GM12878 (cell line): ENCODE measurements at regions of chr5 and their contacts with region 1.

Region 1: GRCh38 chr5:137888857-137889759 is at the start of gene PKD2L2:
- DNase-seq: peak; percentile 75
- ATAC-seq: peak; percentile 99
- H3K4me3 ChIP-seq: peak within 1 kb of the TSS; percentile 79
- H3K27ac ChIP-seq: peak within 1 kb of the TSS; percentile 84
- H3K4me1 ChIP-seq: no peaks in the 10 kb centered on the region
- H3K27me3 ChIP-seq: no peaks in the 10 kb centered on the region
- CTCF ChIP-seq: peak in 2 of 3 experiments; percentile 7 to 12; a peak in 1 of 6 replicates
- EP300 ChIP-seq: 0 out of 4 replicates have a peak, but pooled peaks of 1 of the 2 experiments have one; percentile 26
- POLR2A ChIP-seq: peak; percentile 99
- RAD21 ChIP-seq: no peak
- polyA plus RNA-seq, gene PKD2L2: 0.11 to 0.16 TPM

Region 2: GRCh38 chr5:137858223-137858916 is 30.7 kb before region 1 on chr5:
- CTCF ChIA-PET with region 1: interaction called, 12 read pairs
- POLR2A ChIA-PET with region 1: interaction called, 26 read pairs
- RAD21 ChIA-PET with region 1: interaction called, 11 read pairs
- SMC1A ChIA-PET with region 1: interaction called, 25 read pairs
- in situ Hi-C with region 1: no loop called
- intact Hi-C with region 1: loop called (anchors 2 kb)
- DNase-seq: peak; percentile 58
- ATAC-seq: peak; percentile 91
- H3K4me3 ChIP-seq: no peak overlapping the region
- H3K27ac ChIP-seq: peak overlapping the region; percentile 11
- H3K4me1 ChIP-seq: peaks cover 29% of the 10 kb centered on the region
- H3K27me3 ChIP-seq: no peaks in the 10 kb centered on the region
- CTCF ChIP-seq: no peak
- EP300 ChIP-seq: no peak
- POLR2A ChIP-seq: no peak
- RAD21 ChIP-seq: no peak

Region 3: GRCh38 chr5:137901011-137901817 is 12.1 kb after region 1 on chr5:
- CTCF ChIA-PET with region 1: interaction called, 10 read pairs
- POLR2A ChIA-PET with region 1: interaction called, 13 read pairs
- RAD21 ChIA-PET with region 1: interaction called, 17 read pairs
- SMC1A ChIA-PET with region 1: interaction called, 24 read pairs
- in situ Hi-C with region 1: no loop called
- intact Hi-C with region 1: no loop called
- DNase-seq: no peak
- ATAC-seq: no peak
- H3K4me3 ChIP-seq: no peak overlapping the region
- H3K27ac ChIP-seq: no peak overlapping the region
- H3K4me1 ChIP-seq: peaks cover 16% of the 10 kb centered on the region
- H3K27me3 ChIP-seq: no peaks in the 10 kb centered on the region
- CTCF ChIP-seq: no peak
- EP300 ChIP-seq: no peak
- POLR2A ChIP-seq: no peak
- RAD21 ChIP-seq: no peak

Region 4: GRCh38 chr5:138024117-138024516 is 135.0 kb after region 1 on chr5:
- CTCF ChIA-PET with region 1: interaction called, 17 read pairs
- POLR2A ChIA-PET with region 1: interaction called, 10 read pairs
- RAD21 ChIA-PET with region 1: interaction called, 29 read pairs
- SMC1A ChIA-PET with region 1: interaction called, 32 read pairs
- in situ Hi-C with region 1: no loop called
- intact Hi-C with region 1: no loop called
- DNase-seq: no peak
- ATAC-seq: no peak
- H3K4me3 ChIP-seq: no peak overlapping the region
- H3K27ac ChIP-seq: no peak overlapping the region
- H3K4me1 ChIP-seq: peaks cover 13% of the 10 kb centered on the region
- H3K27me3 ChIP-seq: no peaks in the 10 kb centered on the region
- CTCF ChIP-seq: no peak
- EP300 ChIP-seq: no peak
- POLR2A ChIP-seq: no peak
- RAD21 ChIP-seq: no peak